Posterior cingulate gyrus (tissue), 11 donors: ENCODE measurements at regions of chr6 and their contacts with region 1.

Region 1: DNA sequence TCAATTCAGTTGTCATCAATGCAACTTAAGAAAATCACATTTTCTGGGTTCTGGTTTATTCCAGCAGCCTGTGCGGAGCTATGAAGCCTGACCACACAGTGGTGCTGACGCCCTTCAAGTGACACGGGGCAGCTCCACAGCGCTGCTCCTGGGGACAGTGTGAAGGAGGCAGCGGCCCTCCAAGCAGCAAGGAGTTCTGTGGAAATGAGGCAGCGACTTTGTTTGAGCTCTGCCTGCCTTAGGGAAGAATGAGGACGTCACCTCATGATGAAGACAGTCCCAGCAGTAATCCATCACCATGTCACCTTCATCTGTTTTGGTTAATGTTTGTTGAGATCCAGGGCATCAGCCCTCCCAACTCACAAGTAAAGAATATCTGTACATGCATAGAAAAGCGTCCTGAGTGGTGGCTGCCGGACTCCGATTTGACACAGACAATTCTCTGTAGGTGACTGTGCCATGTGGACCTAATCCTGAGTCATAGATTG is 168.5 kb upstream of the UST start:
- DNase-seq: peak; percentile 67 to 97 (median 82)

Region 2: DNA sequence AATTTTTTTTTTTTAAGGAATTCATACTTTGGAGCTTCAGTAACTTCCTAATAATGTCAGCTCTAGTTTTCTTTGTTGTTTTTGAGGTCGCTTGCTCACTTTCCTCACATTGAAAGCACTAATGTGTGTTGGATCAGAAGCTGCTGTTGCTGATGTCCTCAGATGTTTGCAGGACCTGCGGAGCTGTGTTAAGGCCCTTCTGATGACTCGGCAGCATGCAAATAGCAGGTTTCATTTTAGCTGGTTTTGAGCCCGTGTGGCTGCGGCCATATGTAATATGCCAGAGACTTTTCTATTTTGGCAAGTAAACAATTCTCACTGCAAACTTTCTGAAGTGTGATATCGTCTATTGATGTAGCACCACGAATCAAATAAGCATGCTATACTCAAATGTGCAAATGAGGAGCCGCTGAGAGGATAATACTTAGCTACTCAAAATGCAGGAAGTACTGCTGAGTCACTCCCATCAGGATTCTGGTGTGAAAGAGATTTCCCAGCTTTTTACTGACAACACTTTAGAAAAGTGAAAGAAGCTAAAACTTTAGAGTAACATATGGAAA is 47.8 kb before region 1 on chr6:
- intact Hi-C with region 1: no loop called
- DNase-seq: peak in 1 of 10 donors; percentile 80

Region 3: GRCh38 chr6:148746363-148747144 is 168.3 kb after region 1 on chr6 and contains the start of gene UST:
- intact Hi-C with region 1: loop called (anchors 5 kb)
- DNase-seq: peak; percentile 33 to 90 (median 53)